WTC11 (cell line): ENCODE measurements at regions of chr16 and their contacts with region 1.

Region 1: GRCh38 chr16:85369741-85370528 is 243.2 kb upstream of the GSE1 start:
- DNase-seq: peak; percentile 84
- ATAC-seq: peak; percentile 73
- H3K4me3 Mint-ChIP-seq: no peak overlapping the region
- H3K27ac Mint-ChIP-seq: no peak overlapping the region
- H3K4me1 Mint-ChIP-seq: peaks cover 21% of the 10 kb centered on the region
- H3K27me3 Mint-ChIP-seq: peaks cover 9% of the 10 kb centered on the region
- CTCF ChIP-seq: peak; percentile 85

Region 2: GRCh38 chr16:85275533-85276249 is 94.2 kb before region 1 on chr16:
- CTCF ChIA-PET with region 1: no interaction called
- POLR2A ChIA-PET with region 1: no interaction called
- DNase-seq: peak; percentile 93
- ATAC-seq: peak; percentile 85
- H3K4me3 Mint-ChIP-seq: no peak overlapping the region
- H3K27ac Mint-ChIP-seq: no peak overlapping the region
- H3K4me1 Mint-ChIP-seq: peaks cover 26% of the 10 kb centered on the region
- H3K27me3 Mint-ChIP-seq: no peaks in the 10 kb centered on the region
- CTCF ChIP-seq: peak; percentile 66

Region 3: GRCh38 chr16:85353830-85354685 is 15.9 kb before region 1 on chr16:
- CTCF ChIA-PET with region 1: interaction called, 10 read pairs
- POLR2A ChIA-PET with region 1: no interaction called
- DNase-seq: no peak
- ATAC-seq: no peak
- H3K4me3 Mint-ChIP-seq: no peak overlapping the region
- H3K27ac Mint-ChIP-seq: peak overlapping the region; percentile 25; the same call in 1 of the 2 replicates
- H3K4me1 Mint-ChIP-seq: peaks cover 26% of the 10 kb centered on the region
- H3K27me3 Mint-ChIP-seq: no peaks in the 10 kb centered on the region; the same call in 1 of the 2 replicates
- CTCF ChIP-seq: no peak

Region 4: DNA sequence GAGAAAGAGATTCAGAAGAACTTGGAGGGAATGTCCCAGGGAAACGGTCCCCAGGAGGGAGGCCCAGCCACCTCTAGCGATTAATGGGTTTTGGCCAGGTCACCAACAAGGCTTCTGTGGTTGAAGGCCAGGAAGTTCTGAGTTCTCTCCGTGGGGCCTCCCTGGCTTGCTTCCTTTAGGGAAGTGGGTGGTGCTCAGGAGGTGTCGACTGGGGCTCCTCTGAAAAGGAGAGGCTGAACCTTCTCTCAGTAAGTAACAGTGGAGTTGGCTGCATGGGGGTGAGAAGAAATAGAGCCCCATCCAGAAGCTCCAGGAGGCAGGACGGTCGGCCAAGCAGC is 166.1 kb after region 1 on chr16:
- CTCF ChIA-PET with region 1: no interaction called
- POLR2A ChIA-PET with region 1: no interaction called
- DNase-seq: no peak
- ATAC-seq: no peak
- H3K4me3 Mint-ChIP-seq: no peak overlapping the region
- H3K27ac Mint-ChIP-seq: no peak overlapping the region
- H3K4me1 Mint-ChIP-seq: peaks cover 15% of the 10 kb centered on the region
- H3K27me3 Mint-ChIP-seq: peaks cover 5% of the 10 kb centered on the region; the same call in 1 of the 2 replicates
- CTCF ChIP-seq: no peak